Endothelial cell of umbilical vein (primary cell): ENCODE measurements at regions of chr19 and their contacts with region 1.

Region 1: DNA sequence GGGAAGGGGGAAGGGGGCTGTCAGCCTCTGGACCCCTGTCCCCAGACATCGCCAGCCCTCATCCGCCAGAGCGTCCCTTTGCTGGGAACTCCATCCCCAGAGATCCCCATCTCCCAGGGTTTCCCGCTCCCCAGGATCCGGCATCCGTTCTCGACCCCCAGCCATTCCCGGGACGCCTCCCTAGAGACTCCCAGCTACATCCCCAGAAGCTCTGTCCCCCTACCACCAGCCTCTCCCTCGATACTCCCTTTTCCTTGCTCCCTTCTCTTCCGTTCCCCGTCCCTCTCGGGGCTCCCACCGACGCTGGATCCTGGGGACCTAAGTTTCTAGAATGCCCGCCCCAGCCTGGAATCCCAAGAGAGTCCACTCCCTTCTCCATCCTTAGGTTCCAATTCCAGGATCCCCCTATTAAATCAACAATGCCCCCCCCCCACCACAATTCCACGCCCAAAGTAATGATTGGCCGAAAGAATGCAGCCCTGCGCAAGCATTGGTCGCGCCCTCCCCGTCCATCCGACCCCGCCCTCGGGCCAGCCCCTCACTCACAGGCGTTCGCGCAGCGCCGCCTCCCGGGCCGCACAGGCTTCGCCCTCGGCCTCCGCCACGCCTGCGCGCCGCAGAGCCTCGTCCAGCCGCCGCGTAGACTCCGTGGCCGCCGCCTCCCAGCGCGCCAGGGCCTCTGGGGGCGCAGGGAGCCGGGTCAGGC is 3.2 kb downstream of the CCDC194 start:
- DNase-seq: peak; percentile 95
- H3K4me3 ChIP-seq: peak overlapping the region; percentile 21 to 53 (median 41)
- H3K27ac ChIP-seq: no peak overlapping the region
- H3K4me1 ChIP-seq: peaks cover 17% of the 10 kb centered on the region
- H3K27me3 ChIP-seq: peaks cover 6% of the 10 kb centered on the region in 2 experiments
- CTCF ChIP-seq: peak; percentile 78 to 79
- POLR2A ChIP-seq: peak; percentile 31

Region 2: GRCh38 chr19:16572332-16573211 is 818.2 kb before region 1 on chr19 and contains the start of gene SLC35E1:
- CTCF ChIA-PET with region 1: no interaction called
- POLR2A ChIA-PET with region 1: no interaction called
- dilution Hi-C with region 1: no loop called
- intact Hi-C with region 1: no loop called
- DNase-seq: peak; percentile 93
- H3K4me3 ChIP-seq: peak within 1 kb of the TSS; percentile 64 to 75 (median 73)
- H3K27ac ChIP-seq: peak within 1 kb of the TSS; percentile 73
- H3K4me1 ChIP-seq: peaks cover 16% of the 10 kb centered on the region
- H3K27me3 ChIP-seq: no peaks in the 10 kb centered on the region
- CTCF ChIP-seq: no peak
- POLR2A ChIP-seq: no peak
- total RNA-seq, gene SLC35E1: 30.4 and 37.5 TPM in 2 replicates

Region 3: GRCh38 chr19:17305517-17306284 is 85.1 kb before region 1 on chr19 and contains the start of gene MRPL34:
- CTCF ChIA-PET with region 1: interaction called, 11 read pairs
- POLR2A ChIA-PET with region 1: no interaction called
- dilution Hi-C with region 1: no loop called
- intact Hi-C with region 1: no loop called
- DNase-seq: peak; percentile 99
- H3K4me3 ChIP-seq: peak within 1 kb of the TSS; percentile 44 to 72 (median 59)
- H3K27ac ChIP-seq: peak within 1 kb of the TSS; percentile 47
- H3K4me1 ChIP-seq: peaks cover 17% of the 10 kb centered on the region
- H3K27me3 ChIP-seq: no peaks in the 10 kb centered on the region
- CTCF ChIP-seq: peak; percentile 78 to 87
- POLR2A ChIP-seq: peak; percentile 86
- total RNA-seq, gene MRPL34: 55.7 and 61.6 TPM in 2 replicates

Region 4: GRCh38 chr19:17336872-17337722 is 53.7 kb before region 1 on chr19 and contains the start of gene GTPBP3:
- CTCF ChIA-PET with region 1: interaction called, 18 read pairs
- POLR2A ChIA-PET with region 1: interaction called, 7 read pairs
- dilution Hi-C with region 1: no loop called
- intact Hi-C with region 1: no loop called
- DNase-seq: peak; percentile 97
- H3K4me3 ChIP-seq: peak within 1 kb of the TSS; percentile 83 to 89 (median 88)
- H3K27ac ChIP-seq: peak within 1 kb of the TSS; percentile 45
- H3K4me1 ChIP-seq: peaks cover 14% of the 10 kb centered on the region
- H3K27me3 ChIP-seq: no peaks in the 10 kb centered on the region
- CTCF ChIP-seq: no peak
- POLR2A ChIP-seq: peak; percentile 63
- total RNA-seq, gene GTPBP3: 28.1 and 34.7 TPM in 2 replicates

Region 5: DNA sequence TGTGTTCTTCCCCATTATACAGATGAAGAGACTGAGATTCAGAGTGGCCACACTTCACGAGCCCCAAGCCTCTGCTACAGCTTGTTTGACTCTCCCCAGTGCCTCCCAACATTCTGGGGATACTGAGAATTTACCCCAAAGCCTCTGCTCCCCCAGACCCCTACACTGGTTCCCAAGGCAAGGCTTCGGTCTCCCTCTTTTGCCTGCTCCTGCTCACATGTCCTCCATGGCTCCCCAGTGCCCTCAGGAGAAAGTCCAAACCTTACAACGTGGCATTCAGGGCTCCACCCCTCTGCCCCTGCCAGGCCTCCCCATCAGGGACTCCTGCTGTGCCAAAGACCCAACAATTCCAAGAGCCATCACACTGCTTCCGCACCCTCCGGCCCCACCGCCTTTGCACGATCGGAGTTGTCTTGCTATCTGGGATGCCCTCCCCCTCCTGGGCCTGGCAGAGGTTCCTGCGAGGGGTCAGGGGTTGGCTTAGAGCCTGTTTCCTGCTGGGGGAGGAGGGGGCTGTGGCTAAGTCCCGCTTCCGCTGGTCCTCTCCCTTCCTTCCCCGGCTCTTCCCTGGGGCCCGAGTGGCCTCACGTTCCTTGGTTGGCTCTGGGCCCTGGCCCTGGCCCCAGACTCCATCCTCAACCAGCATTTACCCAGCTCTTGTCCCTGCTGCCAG is 38.1 kb before region 1 on chr19:
- CTCF ChIA-PET with region 1: interaction called, 180 read pairs
- POLR2A ChIA-PET with region 1: no interaction called
- dilution Hi-C with region 1: no loop called
- intact Hi-C with region 1: no loop called
- DNase-seq: peak; percentile 20
- H3K4me3 ChIP-seq: no peak overlapping the region
- H3K27ac ChIP-seq: no peak overlapping the region
- H3K4me1 ChIP-seq: peaks cover 26% of the 10 kb centered on the region
- H3K27me3 ChIP-seq: no peaks in the 10 kb centered on the region
- CTCF ChIP-seq: no peak
- POLR2A ChIP-seq: no peak

Region 6: DNA sequence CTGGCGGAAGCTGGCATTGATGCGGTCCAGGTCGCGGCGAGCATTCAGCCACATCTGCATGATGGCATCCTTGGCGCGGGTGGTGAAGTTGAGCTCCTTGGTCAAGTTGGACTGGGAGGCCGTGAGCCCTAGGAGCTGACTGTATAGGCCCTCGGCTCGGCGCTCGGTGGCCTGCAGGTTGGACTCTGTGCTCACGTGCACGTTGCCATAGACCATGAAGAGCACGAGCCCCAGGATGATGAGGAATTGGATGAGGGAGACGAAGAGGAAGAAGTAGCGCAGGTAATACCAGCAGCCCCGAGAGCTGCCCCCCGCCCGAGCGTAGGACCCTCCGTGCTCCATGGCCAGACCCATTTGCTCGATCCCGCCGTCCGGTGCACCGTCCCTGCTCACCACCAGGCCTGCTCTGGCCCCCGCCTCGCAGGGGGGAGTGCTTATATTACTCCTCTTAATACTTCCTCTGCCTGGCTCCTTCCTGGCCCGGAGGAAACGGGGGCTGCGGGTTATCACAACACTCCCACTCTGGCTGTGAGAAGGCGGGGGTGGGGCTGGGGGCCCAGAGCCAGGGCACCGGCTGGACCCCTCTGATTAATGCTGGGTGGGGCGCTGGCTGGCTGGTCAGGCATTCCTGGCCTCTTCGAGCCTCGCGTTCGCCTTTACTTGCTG is 13.8 kb before region 1 on chr19 and contains the start of gene PLVAP:
- CTCF ChIA-PET with region 1: interaction called, 15 read pairs
- POLR2A ChIA-PET with region 1: no interaction called
- dilution Hi-C with region 1: no loop called
- intact Hi-C with region 1: no loop called
- DNase-seq: peak; percentile 69
- H3K4me3 ChIP-seq: peak within 1 kb of the TSS in 1 of 3 experiments; percentile 22
- H3K27ac ChIP-seq: no peak within 1 kb of the TSS
- H3K4me1 ChIP-seq: peaks cover 30% of the 10 kb centered on the region
- H3K27me3 ChIP-seq: no peaks in the 10 kb centered on the region
- CTCF ChIP-seq: peak in 1 of 2 donors; percentile 25
- POLR2A ChIP-seq: no peak
- total RNA-seq, gene PLVAP: 5.7 and 11.1 TPM in 2 replicates

Region 7: DNA sequence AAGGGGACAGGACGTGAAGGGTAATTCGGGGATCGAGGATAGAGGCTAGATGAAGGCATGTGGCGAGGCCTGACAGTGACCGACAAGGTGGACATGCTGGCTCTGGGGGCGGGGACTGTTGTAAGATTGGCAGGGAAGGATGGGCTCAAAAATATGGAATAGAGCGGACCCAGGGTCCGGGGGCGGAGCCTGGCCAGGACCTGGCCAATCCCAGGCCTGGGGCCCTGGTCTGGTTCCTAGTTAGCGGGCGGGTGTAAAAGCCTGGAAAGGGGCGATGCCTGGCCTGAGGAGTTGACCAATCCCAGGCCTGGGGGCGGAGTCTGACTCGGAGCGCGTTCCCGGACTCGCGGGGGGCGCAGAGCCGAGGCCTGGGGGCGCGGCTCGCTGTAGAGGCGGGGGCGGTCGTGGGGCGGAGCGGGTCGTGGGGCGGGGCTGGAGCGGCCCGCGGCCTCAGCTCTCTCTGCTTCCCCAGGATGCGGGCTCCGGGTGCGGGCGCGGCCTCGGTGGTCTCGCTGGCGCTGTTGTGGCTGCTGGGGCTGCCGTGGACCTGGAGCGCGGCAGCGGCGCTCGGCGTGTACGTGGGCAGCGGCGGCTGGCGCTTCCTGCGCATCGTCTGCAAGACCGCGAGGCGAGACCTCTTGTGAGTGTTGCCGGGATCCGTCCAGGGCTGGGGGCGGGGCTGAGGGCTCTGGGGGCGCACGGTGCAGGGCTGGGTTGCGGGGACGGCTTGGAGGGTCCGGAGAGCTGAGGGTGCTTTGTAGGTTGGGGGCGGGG is 79.4 kb after region 1 on chr19 and contains the start of gene SLC27A1:
- CTCF ChIA-PET with region 1: interaction called, 10 read pairs
- POLR2A ChIA-PET with region 1: no interaction called
- dilution Hi-C with region 1: no loop called
- intact Hi-C with region 1: loop called (anchors 1 kb)
- DNase-seq: peak; percentile 99
- H3K4me3 ChIP-seq: peak within 1 kb of the TSS; percentile 60 to 72 (median 61)
- H3K27ac ChIP-seq: peak within 1 kb of the TSS; percentile 16
- H3K4me1 ChIP-seq: peaks cover 11% of the 10 kb centered on the region
- H3K27me3 ChIP-seq: no peaks in the 10 kb centered on the region
- CTCF ChIP-seq: no peak
- POLR2A ChIP-seq: peak; percentile 38
- total RNA-seq, gene SLC27A1: 13.5 and 14.9 TPM in 2 replicates